GM12878 (cell line): ENCODE measurements at regions of chr10 and their contacts with region 1.

Region 1: DNA sequence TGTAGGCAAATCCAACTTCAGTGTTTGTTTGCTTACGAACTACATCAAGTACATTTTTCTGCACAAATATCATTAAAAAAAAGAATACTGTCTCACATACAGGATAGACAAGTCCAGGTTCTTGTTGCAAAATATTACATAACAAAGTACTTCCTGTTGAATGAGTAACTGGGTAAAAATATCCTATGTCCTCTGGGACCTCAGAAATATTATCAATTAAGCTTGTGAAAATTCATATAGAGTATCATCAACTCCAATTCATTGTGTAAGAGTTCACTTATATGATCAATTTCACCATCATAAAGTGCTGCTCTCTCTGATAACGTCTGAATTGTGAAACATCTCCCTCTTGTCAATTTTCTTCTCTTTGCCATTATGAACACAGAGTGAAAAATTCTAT is 22.6 kb downstream of the HERC4 start:
- DNase-seq: no peak
- ATAC-seq: no peak
- H3K4me3 ChIP-seq: no peak overlapping the region
- H3K27ac ChIP-seq: no peak overlapping the region
- H3K4me1 ChIP-seq: no peaks in the 10 kb centered on the region
- H3K27me3 ChIP-seq: no peaks in the 10 kb centered on the region
- CTCF ChIP-seq: no peak
- EP300 ChIP-seq: no peak
- POLR2A ChIP-seq: no peak
- RAD21 ChIP-seq: no peak

Region 2: GRCh38 chr10:68074775-68075549 is 22.5 kb after region 1 on chr10 and contains the start of gene HERC4:
- CTCF ChIA-PET with region 1: interaction called, 4 read pairs
- POLR2A ChIA-PET with region 1: no interaction called
- RAD21 ChIA-PET with region 1: no interaction called
- SMC1A ChIA-PET with region 1: interaction called, 13 read pairs
- in situ Hi-C with region 1: no loop called
- intact Hi-C with region 1: no loop called
- DNase-seq: peak; percentile 64
- ATAC-seq: peak; percentile 93
- H3K4me3 ChIP-seq: peak within 1 kb of the TSS; percentile 89
- H3K27ac ChIP-seq: peak within 1 kb of the TSS; percentile 92
- H3K4me1 ChIP-seq: 0 out of 2 replicates have a peak, but pooled peaks cover 3% of the 10 kb centered on the region
- H3K27me3 ChIP-seq: no peaks in the 10 kb centered on the region
- CTCF ChIP-seq: no peak
- EP300 ChIP-seq: no peak
- POLR2A ChIP-seq: peak; percentile 97
- RAD21 ChIP-seq: no peak
- polyA plus RNA-seq, gene HERC4: 9.7 to 11.5 TPM